ENCODE measurements at regions of chr6 and their contacts with region 1.

Region 1: DNA sequence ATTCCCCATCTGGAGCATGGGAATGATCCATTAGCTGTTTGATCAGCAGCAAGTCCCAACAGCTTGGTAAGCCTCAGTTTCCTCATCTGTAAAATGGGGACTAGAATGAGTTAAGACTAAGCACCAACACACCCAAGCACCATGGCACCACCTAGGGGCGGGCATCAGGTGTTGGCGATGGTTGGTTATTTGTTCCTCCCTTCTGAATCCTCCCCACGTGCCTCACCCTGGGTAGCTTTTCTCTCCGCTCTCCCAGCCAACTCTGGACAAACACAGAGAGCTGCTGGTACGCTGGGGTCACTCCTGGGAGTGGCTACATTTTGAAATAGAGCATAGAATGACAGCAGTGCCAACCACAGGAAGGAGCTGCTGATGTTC is 13.3 kb upstream of the ITPR3 start:
- DNase-seq: peak; percentile 63
- ATAC-seq: peak; percentile 77
- H3K4me3 Mint-ChIP-seq: no peak overlapping the region
- H3K27ac Mint-ChIP-seq: no peak overlapping the region
- H3K4me1 Mint-ChIP-seq: peaks cover 2% of the 10 kb centered on the region
- H3K27me3 Mint-ChIP-seq: peaks cover 17% of the 10 kb centered on the region

Region 2: GRCh38 chr6:33592411-33593054 is 15.2 kb before region 1 on chr6:
- CTCF ChIA-PET with region 1: interaction called, 27 read pairs
- POLR2A ChIA-PET with region 1: interaction called, 3 read pairs
- DNase-seq: peak; percentile 35
- ATAC-seq: peak; percentile 43
- H3K4me3 Mint-ChIP-seq: peak overlapping the region; percentile 66
- H3K27ac Mint-ChIP-seq: peak overlapping the region; percentile 1
- H3K4me1 Mint-ChIP-seq: peaks cover 31% of the 10 kb centered on the region
- H3K27me3 Mint-ChIP-seq: no peaks in the 10 kb centered on the region

Region 3: DNA sequence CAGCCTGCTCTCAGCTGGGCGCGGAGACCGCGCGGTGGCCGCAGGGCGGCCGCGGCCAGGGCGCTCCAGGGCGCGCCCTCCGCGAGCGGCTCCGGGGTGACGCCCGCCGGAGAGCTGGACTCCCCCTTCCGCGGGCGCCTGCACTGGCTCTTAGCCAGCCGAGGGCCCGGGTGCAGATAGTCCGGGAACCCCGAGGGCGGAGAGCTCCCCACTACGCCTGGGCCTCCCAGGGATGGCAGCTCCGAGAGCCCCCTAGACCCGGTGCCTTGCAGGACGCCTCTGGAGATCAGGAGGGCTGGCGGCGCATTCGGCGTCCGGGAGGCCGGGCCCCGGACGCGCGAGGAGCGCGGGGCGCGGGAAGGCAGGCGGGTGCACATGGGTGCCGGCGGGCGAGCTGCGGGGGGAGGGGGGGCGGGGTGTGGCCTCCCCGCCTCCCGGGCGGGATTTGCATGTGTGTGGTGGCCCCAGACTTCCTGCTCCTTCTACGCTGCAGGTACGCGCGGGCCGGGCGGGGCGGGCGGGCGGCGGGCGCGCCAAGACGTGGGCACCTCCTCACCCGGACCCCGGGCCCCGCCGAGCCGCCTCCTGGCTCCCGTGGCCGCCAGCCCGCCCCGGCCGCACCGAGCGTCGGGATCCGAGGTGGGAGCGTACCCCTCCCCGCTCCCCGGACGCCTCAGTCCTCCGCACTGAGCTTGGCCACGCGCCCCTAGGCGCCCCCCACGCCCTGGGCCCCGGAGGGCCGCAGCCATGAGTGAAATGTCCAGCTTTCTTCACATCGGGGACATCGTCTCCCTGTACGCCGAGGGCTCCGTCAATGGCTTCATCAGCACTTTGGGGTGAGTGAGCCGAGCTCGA is 13.3 kb after region 1 on chr6 and contains the start of gene ITPR3:
- CTCF ChIA-PET with region 1: interaction called, 13 read pairs
- POLR2A ChIA-PET with region 1: interaction called, 5 read pairs
- DNase-seq: peak; percentile 85
- ATAC-seq: peak; percentile 82
- H3K4me3 Mint-ChIP-seq: peak within 1 kb of the TSS; percentile 96
- H3K27ac Mint-ChIP-seq: peak within 1 kb of the TSS; percentile 95
- H3K4me1 Mint-ChIP-seq: peaks cover 60% of the 10 kb centered on the region
- H3K27me3 Mint-ChIP-seq: no peaks in the 10 kb centered on the region
- total RNA-seq, gene ITPR3: 57.8 to 59.3 TPM